ENCODE measurements at regions of chr11 and their contacts with region 1.

Region 1: DNA sequence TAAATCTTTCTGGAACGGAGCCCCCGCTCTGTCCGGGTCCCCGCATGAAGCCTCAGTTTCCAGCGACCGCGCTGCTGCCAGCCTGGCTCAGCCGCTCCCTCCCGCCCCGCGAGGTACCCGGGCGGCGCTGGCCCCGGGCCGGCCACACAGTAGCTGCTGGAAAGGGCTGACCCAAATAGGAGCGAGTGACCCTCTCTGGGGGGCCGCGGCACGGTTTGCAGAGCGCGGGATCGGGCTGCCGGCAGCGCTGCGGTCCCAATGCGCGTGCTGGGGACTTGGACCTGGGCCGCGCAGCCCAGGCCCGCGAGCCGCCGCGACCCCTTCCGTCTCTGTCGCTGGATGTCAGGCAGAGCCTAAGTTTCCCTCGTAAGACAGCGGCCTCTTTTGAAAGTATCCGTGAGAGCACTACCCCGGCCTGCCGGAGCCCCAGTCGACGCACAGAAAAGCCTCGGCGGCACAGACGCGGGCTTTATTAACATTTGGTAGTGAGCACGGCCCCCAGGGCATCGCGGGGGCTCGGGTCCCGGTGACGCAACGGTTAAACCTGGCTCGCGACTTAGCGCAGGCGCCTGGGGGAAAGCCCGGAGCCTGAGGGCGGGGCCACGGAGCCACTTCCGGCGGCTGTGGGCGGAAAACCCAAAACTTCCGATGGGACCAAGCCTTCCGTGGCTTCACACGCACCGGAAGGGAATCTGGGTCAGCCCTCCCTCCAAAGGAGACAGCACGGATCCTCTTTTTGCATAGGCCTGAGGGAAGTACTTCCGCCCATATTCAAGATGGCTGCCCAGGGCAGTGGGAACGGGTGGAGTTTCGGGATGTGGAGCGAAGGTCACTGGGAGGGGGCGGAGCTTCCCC is 14.9 kb downstream of the BAD start:
- DNase-seq: peak; percentile 98 to 99
- ATAC-seq: peak; percentile 84 to 88 (median 86)
- H3K4me3 ChIP-seq: peak overlapping the region; percentile 83
- H3K27ac ChIP-seq: peak overlapping the region; percentile 93
- H3K4me1 ChIP-seq: peaks cover 20% of the 10 kb centered on the region
- H3K27me3 ChIP-seq: no peaks in the 10 kb centered on the region
- CTCF ChIP-seq: peak; percentile 19

Region 2: GRCh38 chr11:64165849-64166635 is 103.6 kb before region 1 on chr11 and contains the start of gene MACROD1:
- intact Hi-C with region 1: no loop called
- DNase-seq: peak; percentile 93 to 96
- ATAC-seq: peak; percentile 81 to 83 (median 82)
- H3K4me3 ChIP-seq: peak within 1 kb of the TSS; percentile 87
- H3K27ac ChIP-seq: peak within 1 kb of the TSS; percentile 98
- H3K4me1 ChIP-seq: peaks cover 14% of the 10 kb centered on the region
- H3K27me3 ChIP-seq: no peaks in the 10 kb centered on the region
- CTCF ChIP-seq: no peak
- total RNA-seq, gene MACROD1: 151 to 206 (median 182) TPM

Region 3: GRCh38 chr11:64204464-64204989 is 65.1 kb before region 1 on chr11:
- intact Hi-C with region 1: loop called in 1 of 2 experiments (anchors 5 kb)
- DNase-seq: peak; percentile 86 to 92
- ATAC-seq: peak; percentile 78 to 84 (median 80)
- H3K4me3 ChIP-seq: no peak overlapping the region
- H3K27ac ChIP-seq: peak overlapping the region; percentile 34
- H3K4me1 ChIP-seq: peaks cover 11% of the 10 kb centered on the region
- H3K27me3 ChIP-seq: no peaks in the 10 kb centered on the region
- CTCF ChIP-seq: peak; percentile 65

Region 4: DNA sequence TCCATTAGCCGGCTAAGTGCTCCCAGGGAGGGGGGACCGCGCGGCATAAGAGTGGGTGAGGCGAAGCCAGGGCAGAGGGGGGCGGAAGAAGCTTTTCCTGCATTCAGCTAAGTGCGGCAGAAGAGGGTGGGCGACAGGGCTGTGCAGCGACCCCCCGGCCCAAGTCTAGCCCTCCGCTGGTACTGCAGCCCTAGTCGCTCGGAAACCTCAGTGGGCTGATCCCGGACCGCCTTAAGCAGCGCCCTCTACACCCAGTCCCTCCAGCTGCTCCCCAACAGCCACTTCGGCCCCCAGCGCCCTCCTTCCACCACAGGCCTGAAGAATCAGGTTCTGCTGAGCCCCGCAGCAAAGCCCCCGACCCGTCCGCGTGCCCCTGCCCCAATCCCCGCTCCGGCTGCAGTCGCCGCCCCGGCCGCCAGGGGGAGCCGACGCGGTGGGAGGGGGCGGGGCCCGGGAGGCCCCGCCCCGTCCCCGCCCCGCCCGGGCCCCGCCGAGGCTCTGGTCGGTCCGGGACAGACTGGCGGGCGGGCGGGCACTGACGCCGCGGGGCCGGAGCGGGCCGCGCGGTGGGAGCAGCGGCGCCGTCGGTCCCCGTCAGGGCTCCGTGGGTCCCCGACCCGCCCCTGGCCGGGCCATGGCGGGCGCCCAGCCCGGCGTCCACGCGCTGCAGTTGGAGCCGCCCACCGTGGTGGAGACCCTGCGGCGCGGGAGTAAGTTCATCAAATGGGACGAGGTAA is 18.4 kb before region 1 on chr11 and contains the start of gene PLCB3:
- intact Hi-C with region 1: loop called (anchors 2 kb)
- DNase-seq: peak; percentile 55 to 82
- ATAC-seq: peak; percentile 58 to 67 (median 64)
- H3K4me3 ChIP-seq: peak within 1 kb of the TSS; percentile 89
- H3K27ac ChIP-seq: peak within 1 kb of the TSS; percentile 75
- H3K4me1 ChIP-seq: peaks cover 36% of the 10 kb centered on the region
- H3K27me3 ChIP-seq: no peaks in the 10 kb centered on the region
- CTCF ChIP-seq: peak; percentile 83
- total RNA-seq, gene PLCB3: 5.9 to 10.4 (median 8.2) TPM

Region 5: DNA sequence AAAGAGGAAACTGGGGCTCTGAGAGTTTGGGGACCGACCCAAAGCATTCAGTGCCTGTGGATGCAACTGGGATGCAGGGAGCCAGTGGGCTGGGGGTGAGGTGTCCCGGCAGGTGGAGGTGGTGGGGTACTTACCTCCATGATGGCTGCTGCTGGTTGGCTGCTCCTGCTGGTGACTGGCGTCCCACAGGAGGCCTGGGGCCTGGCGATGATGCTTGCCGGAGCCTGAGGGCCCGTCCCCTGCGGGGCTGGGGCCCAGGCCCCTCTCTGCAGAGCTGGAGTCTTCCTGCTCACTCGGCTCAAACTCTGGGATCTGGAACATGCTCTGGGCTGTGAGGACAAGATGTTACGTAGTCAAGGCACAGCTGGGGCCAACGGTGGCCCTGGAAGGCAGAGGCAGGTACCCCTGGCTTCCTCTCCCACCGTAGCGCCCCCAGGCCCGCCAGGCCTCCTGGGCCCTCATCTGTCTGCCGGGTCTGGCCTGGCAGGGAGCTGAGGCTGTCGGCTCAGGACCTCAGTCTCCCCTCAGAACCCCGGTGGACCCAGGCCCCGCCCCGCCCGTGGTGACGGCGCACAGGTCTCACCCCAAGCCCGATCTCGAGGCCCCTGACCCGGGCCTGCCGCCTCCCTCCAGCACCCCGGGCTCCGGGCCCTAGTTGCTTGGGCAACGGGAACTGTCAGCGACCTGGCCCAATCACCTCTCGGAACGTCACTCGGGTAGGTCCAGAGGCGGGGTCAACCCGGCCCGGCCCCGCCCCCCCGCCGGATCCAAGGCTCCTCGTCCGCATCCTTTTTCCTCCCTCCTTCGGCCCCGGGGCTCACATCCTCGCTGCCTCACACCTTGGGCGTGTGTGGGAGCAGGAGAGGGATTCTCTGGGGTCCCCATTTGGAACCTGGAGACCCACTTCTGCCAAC is 14.7 kb after region 1 on chr11 and contains the start of gene BAD:
- intact Hi-C with region 1: loop called in 1 of 2 experiments (anchors 2 kb)
- DNase-seq: peak; percentile 95 to 97
- ATAC-seq: peak; percentile 87 to 93 (median 91)
- H3K4me3 ChIP-seq: peak within 1 kb of the TSS; percentile 79
- H3K27ac ChIP-seq: peak within 1 kb of the TSS; percentile 93
- H3K4me1 ChIP-seq: peaks cover 25% of the 10 kb centered on the region
- H3K27me3 ChIP-seq: no peaks in the 10 kb centered on the region
- CTCF ChIP-seq: no peak
- total RNA-seq, gene BAD: 29.8 to 32.6 (median 30.4) TPM

Region 6: DNA sequence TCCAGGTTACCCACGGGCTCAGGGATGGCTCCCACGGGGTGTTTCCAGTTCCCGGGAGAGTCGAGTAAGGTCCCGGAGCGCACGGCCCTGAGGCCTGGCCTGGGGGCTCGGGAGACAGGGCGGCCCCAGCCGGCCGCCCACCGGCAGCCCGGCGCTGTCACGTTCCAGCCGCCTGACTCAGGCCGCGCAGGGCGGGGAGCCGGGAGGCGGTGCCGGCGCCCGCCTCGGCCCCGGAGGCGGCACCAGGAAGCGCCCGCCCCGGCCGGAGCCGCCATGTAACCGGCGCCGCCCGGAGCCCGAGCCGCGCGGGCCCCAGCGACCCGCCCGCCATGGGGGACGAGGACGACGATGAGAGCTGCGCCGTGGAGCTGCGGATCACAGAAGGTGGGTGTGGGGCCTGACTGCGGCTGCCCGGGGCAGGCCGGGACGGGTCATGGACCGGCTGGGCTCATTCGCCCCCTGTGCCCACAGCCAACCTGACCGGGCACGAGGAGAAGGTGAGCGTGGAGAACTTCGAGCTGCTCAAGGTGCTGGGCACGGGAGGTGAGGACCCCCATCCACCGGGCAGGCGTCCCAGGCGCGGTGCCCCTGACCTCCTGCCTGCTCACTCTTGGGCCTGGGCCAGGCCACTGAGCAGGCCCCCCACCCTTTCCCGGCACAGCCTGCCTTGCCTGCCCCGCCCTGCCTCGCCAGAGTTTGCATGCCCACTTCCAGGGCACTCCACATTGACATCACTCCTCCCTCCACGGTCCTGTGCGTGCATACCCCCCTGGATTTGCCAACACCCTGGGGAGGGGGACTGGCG is 89.5 kb after region 1 on chr11 and contains the start of gene RPS6KA4:
- intact Hi-C with region 1: no loop called
- DNase-seq: peak; percentile 71 to 83
- ATAC-seq: peak; percentile 73 to 88 (median 86)
- H3K4me3 ChIP-seq: peak within 1 kb of the TSS; percentile 95
- H3K27ac ChIP-seq: peak within 1 kb of the TSS; percentile 90
- H3K4me1 ChIP-seq: peaks cover 6% of the 10 kb centered on the region
- H3K27me3 ChIP-seq: no peaks in the 10 kb centered on the region
- CTCF ChIP-seq: no peak
- total RNA-seq, gene RPS6KA4: 9.5 to 15.9 (median 13.6) TPM

Measured in psoas muscle (tissue), 8 donors.